Breast epithelium (tissue), 4 donors: ENCODE measurements at regions of chr10 and their contacts with region 1.

Region 1: GRCh38 chr10:33876584-33877400 is 542.3 kb upstream of the NRP1 start:
- DNase-seq: no peak
- H3K4me3 ChIP-seq: no peak overlapping the region
- H3K27ac ChIP-seq: no peak overlapping the region
- H3K4me1 ChIP-seq: no peaks in the 10 kb centered on the region
- H3K27me3 ChIP-seq: no peaks in the 10 kb centered on the region
- CTCF ChIP-seq: no peak
- POLR2A ChIP-seq: no peak

Region 2: DNA sequence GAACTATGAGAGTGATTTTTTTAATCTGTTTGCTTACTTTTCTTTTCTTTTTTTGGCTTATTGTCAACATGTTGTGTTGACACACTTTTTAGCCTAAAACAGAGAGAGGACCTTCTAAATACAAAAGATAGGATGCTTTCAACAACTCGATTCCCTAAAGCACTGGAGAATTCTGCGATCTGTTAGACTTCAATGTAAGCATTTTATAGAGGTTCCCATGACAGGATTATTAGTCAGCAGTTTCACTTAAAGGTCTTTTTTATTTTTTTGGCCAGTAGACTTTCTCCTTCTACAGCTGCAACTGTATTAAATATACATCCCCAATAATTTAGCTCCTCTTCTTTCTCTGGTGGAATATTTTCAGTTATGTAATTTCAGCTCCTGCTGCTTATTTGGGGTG is 529.6 kb before region 1 on chr10:
- intact Hi-C with region 1: loop called (anchors 5 kb)
- DNase-seq: no peak
- H3K4me3 ChIP-seq: no peak overlapping the region
- H3K27ac ChIP-seq: no peak overlapping the region
- H3K4me1 ChIP-seq: no peaks in the 10 kb centered on the region
- H3K27me3 ChIP-seq: no peaks in the 10 kb centered on the region
- CTCF ChIP-seq: no peak
- POLR2A ChIP-seq: no peak